ENCODE measurements at regions of chr1 and their contacts with region 1.

Region 1: DNA sequence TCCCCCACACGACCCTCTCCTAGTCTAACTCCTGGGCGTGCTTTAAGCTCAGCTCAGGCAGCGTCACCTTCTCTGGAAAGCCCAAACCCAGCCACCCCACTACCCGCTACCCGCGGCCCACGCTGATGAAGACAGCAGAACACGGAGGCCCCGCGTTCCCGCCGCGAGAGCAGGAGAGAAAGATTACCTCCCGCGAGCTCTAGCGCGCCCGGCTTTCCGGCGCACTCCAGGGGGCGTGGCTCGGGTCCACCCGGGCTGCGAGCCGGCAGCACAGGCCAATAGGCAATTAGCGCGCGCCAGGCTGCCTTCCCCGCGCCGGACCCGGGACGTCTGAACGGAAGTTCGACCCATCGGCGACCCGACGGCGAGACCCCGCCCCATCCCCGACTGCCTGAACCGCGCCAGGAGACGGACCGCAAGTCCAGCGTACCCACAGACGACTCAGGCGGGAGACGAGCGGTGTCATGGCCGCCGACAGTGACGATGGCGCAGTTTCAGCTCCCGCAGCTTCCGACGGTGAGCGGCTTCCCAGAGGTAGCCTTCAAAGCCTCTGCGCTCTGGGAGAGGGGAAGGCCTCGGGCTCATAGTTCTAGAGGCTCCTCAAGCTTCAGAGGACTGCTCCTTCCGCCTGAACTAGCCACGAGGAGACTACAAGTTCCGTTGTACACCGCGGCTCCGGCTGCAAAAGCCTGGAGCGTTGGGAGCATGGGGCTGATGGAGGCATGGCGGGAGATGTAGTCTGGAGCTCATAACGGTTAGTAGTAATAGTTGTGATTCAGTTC is at the starts of genes MUTYH and TOE1:
- DNase-seq: peak; percentile 73
- ATAC-seq: peak; percentile 92
- H3K4me3 ChIP-seq: peak within 1 kb of the TSS; percentile 71
- H3K27ac ChIP-seq: peak within 1 kb of the TSS; percentile 93
- H3K4me1 ChIP-seq: peaks cover 11% of the 10 kb centered on the region
- H3K27me3 ChIP-seq: no peaks in the 10 kb centered on the region
- CTCF ChIP-seq: no peak
- EP300 ChIP-seq: no peak
- POLR2A ChIP-seq: peak; percentile 97
- RAD21 ChIP-seq: no peak
- polyA plus RNA-seq, gene MUTYH: 2.5 to 10.5 TPM
- polyA plus RNA-seq, gene TOE1: 33.5 to 38.0 TPM

Region 2: GRCh38 chr1:45317166-45317565 is 22.8 kb before region 1 on chr1:
- CTCF ChIA-PET with region 1: interaction called, 3 read pairs
- POLR2A ChIA-PET with region 1: interaction called, 4 read pairs
- RAD21 ChIA-PET with region 1: interaction called, 11 read pairs
- SMC1A ChIA-PET with region 1: interaction called, 17 read pairs
- in situ Hi-C with region 1: no loop called
- intact Hi-C with region 1: no loop called
- DNase-seq: no peak
- ATAC-seq: no peak
- H3K4me3 ChIP-seq: no peak overlapping the region
- H3K27ac ChIP-seq: no peak overlapping the region
- H3K4me1 ChIP-seq: peaks cover 8% of the 10 kb centered on the region; the same call in 1 of the 2 replicates
- H3K27me3 ChIP-seq: no peaks in the 10 kb centered on the region
- CTCF ChIP-seq: no peak
- EP300 ChIP-seq: no peak
- POLR2A ChIP-seq: no peak
- RAD21 ChIP-seq: no peak

Region 3: GRCh38 chr1:45326627-45327623 is 13.1 kb before region 1 on chr1 and contains the start of gene HPDL:
- CTCF ChIA-PET with region 1: interaction called, 42 read pairs
- POLR2A ChIA-PET with region 1: interaction called, 45 read pairs
- RAD21 ChIA-PET with region 1: interaction called, 12 read pairs
- SMC1A ChIA-PET with region 1: interaction called, 49 read pairs
- in situ Hi-C with region 1: no loop called
- intact Hi-C with region 1: no loop called
- DNase-seq: no peak
- ATAC-seq: peak; percentile 89
- H3K4me3 ChIP-seq: peak within 1 kb of the TSS; percentile 82
- H3K27ac ChIP-seq: peak within 1 kb of the TSS; percentile 80
- H3K4me1 ChIP-seq: peaks cover 16% of the 10 kb centered on the region; the same call in 1 of the 2 replicates
- H3K27me3 ChIP-seq: no peaks in the 10 kb centered on the region
- CTCF ChIP-seq: 0 out of 6 replicates have a peak, but pooled peaks of 1 of the 3 experiments have one; percentile 5
- EP300 ChIP-seq: no peak
- POLR2A ChIP-seq: peak; percentile 91
- RAD21 ChIP-seq: no peak
- polyA plus RNA-seq, gene HPDL: 1.3 to 3.6 TPM

Region 4: DNA sequence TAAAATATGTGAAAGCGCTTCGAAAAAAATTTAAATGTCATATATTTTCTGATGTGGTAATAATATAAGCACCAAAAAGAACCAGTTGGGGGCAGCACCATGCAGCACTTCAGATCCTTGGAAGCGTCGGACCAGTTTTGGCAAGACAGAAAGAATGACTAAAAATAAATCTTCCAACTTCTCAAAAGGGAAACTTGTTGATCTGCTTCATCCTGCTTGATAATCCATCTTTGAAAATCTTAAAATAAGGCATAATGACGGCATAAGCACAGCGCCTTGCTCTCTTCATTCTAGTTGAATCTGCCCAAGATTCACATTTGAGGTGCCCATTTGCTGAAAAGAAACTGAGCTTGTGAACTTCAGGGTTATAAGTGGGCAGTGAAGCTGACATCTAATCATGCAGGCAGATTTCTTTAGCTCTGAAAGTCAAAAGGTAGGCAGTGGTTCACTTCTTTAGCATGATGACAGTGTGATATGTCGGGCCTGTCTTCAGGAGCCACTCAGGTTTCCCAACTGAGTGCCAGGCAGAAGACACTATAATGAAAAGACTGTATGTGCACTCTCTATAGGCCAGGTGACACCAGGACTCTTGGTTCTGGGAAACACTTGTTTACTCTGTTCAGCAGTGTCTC is 20.0 kb after region 1 on chr1:
- CTCF ChIA-PET with region 1: interaction called, 14 read pairs
- POLR2A ChIA-PET with region 1: interaction called, 4 read pairs
- RAD21 ChIA-PET with region 1: interaction called, 28 read pairs
- SMC1A ChIA-PET with region 1: interaction called, 7 read pairs
- in situ Hi-C with region 1: no loop called
- intact Hi-C with region 1: no loop called
- DNase-seq: no peak
- ATAC-seq: peak; percentile 81
- H3K4me3 ChIP-seq: no peak overlapping the region
- H3K27ac ChIP-seq: no peak overlapping the region
- H3K4me1 ChIP-seq: peaks cover 9% of the 10 kb centered on the region
- H3K27me3 ChIP-seq: no peaks in the 10 kb centered on the region
- CTCF ChIP-seq: peak; percentile 49 to 78 (median 59); a peak in 5 of 6 replicates
- EP300 ChIP-seq: no peak
- POLR2A ChIP-seq: no peak
- RAD21 ChIP-seq: peak; percentile 97

Region 5: GRCh38 chr1:45583264-45583665 is 243.3 kb after region 1 on chr1:
- CTCF ChIA-PET with region 1: interaction called, 4 read pairs
- POLR2A ChIA-PET with region 1: interaction called, 15 read pairs
- RAD21 ChIA-PET with region 1: interaction called, 5 read pairs
- SMC1A ChIA-PET with region 1: no interaction called
- in situ Hi-C with region 1: no loop called
- intact Hi-C with region 1: no loop called
- DNase-seq: peak; percentile 98
- ATAC-seq: peak; percentile 89
- H3K4me3 ChIP-seq: peak overlapping the region; percentile 94
- H3K27ac ChIP-seq: peak overlapping the region; percentile 97
- H3K4me1 ChIP-seq: peaks cover 12% of the 10 kb centered on the region; the same call in 1 of the 2 replicates
- H3K27me3 ChIP-seq: no peaks in the 10 kb centered on the region
- CTCF ChIP-seq: no peak
- EP300 ChIP-seq: no peak
- POLR2A ChIP-seq: no peak
- RAD21 ChIP-seq: no peak

Region 6: GRCh38 chr1:46183088-46183842 is 843.3 kb after region 1 on chr1:
- CTCF ChIA-PET with region 1: no interaction called
- POLR2A ChIA-PET with region 1: no interaction called
- RAD21 ChIA-PET with region 1: no interaction called
- SMC1A ChIA-PET with region 1: no interaction called
- in situ Hi-C with region 1: no loop called
- intact Hi-C with region 1: no loop called
- DNase-seq: no peak
- ATAC-seq: no peak
- H3K4me3 ChIP-seq: no peak overlapping the region
- H3K27ac ChIP-seq: no peak overlapping the region
- H3K4me1 ChIP-seq: peaks cover 27% of the 10 kb centered on the region
- H3K27me3 ChIP-seq: no peaks in the 10 kb centered on the region
- CTCF ChIP-seq: no peak
- EP300 ChIP-seq: no peak
- POLR2A ChIP-seq: no peak
- RAD21 ChIP-seq: no peak

Measured in GM12878 (cell line).